ENCODE measurements at regions of chr4 and their contacts with region 1.

Region 1: DNA sequence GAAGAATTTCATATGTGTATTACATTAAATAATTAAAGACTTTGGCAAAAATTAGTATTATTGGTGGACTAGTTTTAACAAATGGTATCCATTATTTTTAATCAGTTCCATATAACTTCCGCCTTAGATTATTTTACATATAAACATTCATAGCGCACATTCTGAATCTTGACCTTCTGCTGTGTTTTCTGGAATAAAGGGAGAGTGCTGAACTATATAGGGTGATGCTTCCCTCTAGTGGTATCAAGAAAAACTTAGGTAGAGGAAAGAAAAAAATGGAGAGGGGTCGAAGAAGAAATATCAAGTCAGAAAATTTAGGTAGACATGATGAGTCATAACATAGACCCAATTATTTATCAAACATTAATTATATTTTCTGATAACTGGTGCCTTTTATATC is 155.6 kb upstream of the PACRGL start:
- DNase-seq: no peak
- ATAC-seq: peak; percentile 34
- H3K4me3 ChIP-seq: no peak overlapping the region
- H3K4me1 ChIP-seq: no peaks in the 10 kb centered on the region
- CTCF ChIP-seq: no peak

Region 2: GRCh38 chr4:20313237-20314030 is 231.2 kb before region 1 on chr4:
- intact Hi-C with region 1: no loop called
- DNase-seq: peak in 2 of 3 donors; percentile 21 to 34
- ATAC-seq: peak; percentile 39
- H3K4me3 ChIP-seq: no peak overlapping the region
- H3K4me1 ChIP-seq: no peaks in the 10 kb centered on the region
- CTCF ChIP-seq: no peak

Region 3: GRCh38 chr4:20684852-20685763 is 140.5 kb after region 1 on chr4:
- intact Hi-C with region 1: loop called in 1 of 2 experiments (anchors 10 kb)
- DNase-seq: no peak
- ATAC-seq: no peak
- H3K4me3 ChIP-seq: no peak overlapping the region
- H3K4me1 ChIP-seq: no peaks in the 10 kb centered on the region
- CTCF ChIP-seq: peak; percentile 44

Region 4: GRCh38 chr4:20754036-20754435 is 209.4 kb after region 1 on chr4:
- intact Hi-C with region 1: no loop called
- DNase-seq: no peak
- ATAC-seq: no peak
- H3K4me3 ChIP-seq: no peak overlapping the region
- H3K4me1 ChIP-seq: no peaks in the 10 kb centered on the region
- CTCF ChIP-seq: no peak